MCF 10A (cell line): ENCODE measurements at regions of chr3 and their contacts with region 1.

Region 1: GRCh38 chr3:118128886-118129285 is 905.8 kb downstream of the IGSF11 start:
- DNase-seq: peak; percentile 70
- H3K4me3 Mint-ChIP-seq: no peak overlapping the region
- H3K27ac Mint-ChIP-seq: no peak overlapping the region
- H3K4me1 Mint-ChIP-seq: peaks cover 13% of the 10 kb centered on the region
- H3K27me3 Mint-ChIP-seq: no peaks in the 10 kb centered on the region
- CTCF ChIP-seq: no peak

Region 2: DNA sequence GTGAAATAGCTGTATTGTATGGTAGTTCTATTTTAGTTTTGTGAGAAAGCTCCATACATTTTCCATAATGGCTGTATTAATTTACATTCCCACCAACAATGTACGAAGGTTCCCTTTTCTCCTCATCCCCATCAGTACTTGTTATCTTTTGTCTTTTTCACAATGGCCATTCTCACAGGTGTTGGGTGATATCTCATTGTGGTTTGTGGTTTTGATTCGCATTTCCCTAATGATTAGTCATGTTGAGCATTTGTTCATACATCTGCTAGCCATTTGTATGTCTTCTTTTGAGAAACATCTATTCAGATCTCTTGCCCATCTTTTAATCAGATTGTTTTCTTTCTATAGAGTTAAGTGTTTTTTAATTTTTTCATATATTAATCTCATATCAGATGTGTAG is 26.1 kb before region 1 on chr3:
- CTCF ChIA-PET with region 1: no interaction called
- POLR2A ChIA-PET with region 1: no interaction called
- intact Hi-C with region 1: loop called (anchors 2 kb)
- DNase-seq: peak; percentile 47
- H3K4me3 Mint-ChIP-seq: no peak overlapping the region
- H3K27ac Mint-ChIP-seq: no peak overlapping the region
- H3K4me1 Mint-ChIP-seq: peaks cover 16% of the 10 kb centered on the region
- H3K27me3 Mint-ChIP-seq: no peaks in the 10 kb centered on the region
- CTCF ChIP-seq: no peak

Region 3: GRCh38 chr3:118636841-118637240 is 508.0 kb after region 1 on chr3:
- CTCF ChIA-PET with region 1: no interaction called
- POLR2A ChIA-PET with region 1: no interaction called
- intact Hi-C with region 1: loop called (anchors 1 kb)
- DNase-seq: peak; percentile 45
- H3K4me3 Mint-ChIP-seq: no peak overlapping the region
- H3K27ac Mint-ChIP-seq: no peak overlapping the region
- H3K4me1 Mint-ChIP-seq: peaks cover 11% of the 10 kb centered on the region
- H3K27me3 Mint-ChIP-seq: no peaks in the 10 kb centered on the region
- CTCF ChIP-seq: peak; percentile 32